ENCODE measurements at regions of chr14 and their contacts with region 1.

Region 1: GRCh38 chr14:71267007-71267513 is 359.8 kb downstream of the PCNX1 start:
- DNase-seq: no peak
- H3K4me3 Mint-ChIP-seq: peak overlapping the region; percentile 41
- H3K27ac Mint-ChIP-seq: peak overlapping the region; percentile 86
- H3K4me1 Mint-ChIP-seq: peaks cover 44% of the 10 kb centered on the region
- H3K27me3 Mint-ChIP-seq: no peaks in the 10 kb centered on the region

Region 2: DNA sequence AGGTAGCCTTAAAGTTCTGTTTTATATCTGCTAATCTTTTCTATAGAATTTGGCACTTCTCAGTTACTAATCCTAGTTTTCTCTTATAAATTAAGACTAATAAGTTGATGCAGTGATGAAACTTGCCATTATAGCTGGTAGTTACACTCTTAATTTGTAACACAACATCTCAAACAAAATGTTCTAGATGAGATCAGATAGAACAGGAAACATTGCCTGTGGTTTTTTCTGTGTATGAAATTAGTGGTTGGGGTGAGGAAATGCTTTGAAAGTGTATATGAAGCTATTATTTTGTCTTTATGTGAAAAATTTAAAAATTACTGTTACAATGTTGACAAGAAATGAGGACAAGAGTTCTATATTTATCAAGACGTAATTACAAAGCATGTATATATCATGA is 267.9 kb before region 1 on chr14:
- intact Hi-C with region 1: no loop called
- DNase-seq: no peak
- H3K4me3 Mint-ChIP-seq: peak overlapping the region; percentile 24
- H3K27ac Mint-ChIP-seq: peak overlapping the region; percentile 31
- H3K4me1 Mint-ChIP-seq: peaks cover 51% of the 10 kb centered on the region
- H3K27me3 Mint-ChIP-seq: no peaks in the 10 kb centered on the region

Region 3: GRCh38 chr14:71060825-71061455 is 206.1 kb before region 1 on chr14:
- intact Hi-C with region 1: no loop called
- DNase-seq: no peak
- H3K4me3 Mint-ChIP-seq: no peak overlapping the region
- H3K27ac Mint-ChIP-seq: no peak overlapping the region
- H3K4me1 Mint-ChIP-seq: no peaks in the 10 kb centered on the region
- H3K27me3 Mint-ChIP-seq: no peaks in the 10 kb centered on the region

Region 4: DNA sequence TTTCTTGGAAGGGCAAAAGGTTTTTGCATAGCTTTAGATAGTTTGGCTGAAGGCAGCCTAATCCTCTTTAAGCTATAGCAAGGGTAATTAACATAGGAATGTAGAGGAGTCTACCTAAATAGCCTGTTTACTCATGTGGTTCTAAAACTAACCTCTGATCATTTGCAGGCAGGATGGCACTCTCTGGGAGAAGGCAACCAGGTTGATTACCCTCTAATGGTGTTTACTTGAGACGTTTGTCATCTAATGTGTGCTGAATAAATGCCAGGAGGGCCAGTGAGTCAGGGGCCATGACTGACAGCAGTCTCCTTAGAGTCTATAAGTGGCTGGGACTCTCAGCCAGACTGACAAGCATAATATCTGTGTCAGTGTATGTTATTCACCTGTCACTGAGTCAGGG is 73.4 kb before region 1 on chr14:
- intact Hi-C with region 1: no loop called
- DNase-seq: no peak
- H3K4me3 Mint-ChIP-seq: no peak overlapping the region
- H3K27ac Mint-ChIP-seq: no peak overlapping the region
- H3K4me1 Mint-ChIP-seq: peaks cover 7% of the 10 kb centered on the region
- H3K27me3 Mint-ChIP-seq: peaks cover 20% of the 10 kb centered on the region

Region 5: GRCh38 chr14:71221119-71221518 is 45.9 kb before region 1 on chr14:
- intact Hi-C with region 1: loop called (anchors 1 kb)
- DNase-seq: no peak
- H3K4me3 Mint-ChIP-seq: no peak overlapping the region
- H3K27ac Mint-ChIP-seq: no peak overlapping the region
- H3K4me1 Mint-ChIP-seq: peaks cover 24% of the 10 kb centered on the region
- H3K27me3 Mint-ChIP-seq: no peaks in the 10 kb centered on the region

Region 6: GRCh38 chr14:71290960-71291466 is 24.0 kb after region 1 on chr14:
- intact Hi-C with region 1: loop called (anchors 1 kb)
- DNase-seq: no peak
- H3K4me3 Mint-ChIP-seq: no peak overlapping the region
- H3K27ac Mint-ChIP-seq: peak overlapping the region; percentile 73
- H3K4me1 Mint-ChIP-seq: peaks cover 17% of the 10 kb centered on the region
- H3K27me3 Mint-ChIP-seq: peaks cover 4% of the 10 kb centered on the region

Region 7: DNA sequence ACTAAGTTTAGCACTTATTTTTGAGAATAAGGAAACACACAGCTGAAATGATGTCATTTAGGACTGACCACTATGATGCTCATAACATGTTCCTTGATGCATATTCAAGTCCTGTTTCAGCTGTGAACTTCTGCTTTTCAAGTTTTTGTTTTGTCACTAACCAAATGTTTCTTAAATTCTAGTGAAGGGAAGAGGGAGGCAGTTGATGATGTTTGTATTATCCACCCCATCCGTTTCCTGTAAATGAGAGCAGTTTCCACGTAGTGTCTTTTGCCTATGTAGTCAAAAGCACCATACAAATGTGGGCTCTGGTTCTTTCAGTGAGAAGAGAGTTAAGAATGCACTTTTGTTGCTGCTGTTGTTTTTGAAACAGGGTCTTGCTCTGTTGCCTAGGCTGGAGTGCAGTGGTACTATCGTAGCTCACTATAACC is 132.0 kb after region 1 on chr14:
- intact Hi-C with region 1: loop called (anchors 1 kb)
- DNase-seq: no peak
- H3K4me3 Mint-ChIP-seq: peak overlapping the region; percentile 37
- H3K27ac Mint-ChIP-seq: peak overlapping the region; percentile 92
- H3K4me1 Mint-ChIP-seq: peaks cover 54% of the 10 kb centered on the region
- H3K27me3 Mint-ChIP-seq: no peaks in the 10 kb centered on the region